Activated T-helper 1 cell treated with anti-CD3 and anti-CD28 coated beads, Interleukin-12 subunit alpha, Interleukin-12 subunit beta, Interleukin-2, Interleukin-4 antibody, amounts not matched to agents 30 ng/mL and 10 ng/mL and 1 ng/mL, durations not matched to agents 14 hours and 24 hours and 36 hours (primary cell): ENCODE measurements at regions of chr2 and their contacts with region 1.

Region 1: DNA sequence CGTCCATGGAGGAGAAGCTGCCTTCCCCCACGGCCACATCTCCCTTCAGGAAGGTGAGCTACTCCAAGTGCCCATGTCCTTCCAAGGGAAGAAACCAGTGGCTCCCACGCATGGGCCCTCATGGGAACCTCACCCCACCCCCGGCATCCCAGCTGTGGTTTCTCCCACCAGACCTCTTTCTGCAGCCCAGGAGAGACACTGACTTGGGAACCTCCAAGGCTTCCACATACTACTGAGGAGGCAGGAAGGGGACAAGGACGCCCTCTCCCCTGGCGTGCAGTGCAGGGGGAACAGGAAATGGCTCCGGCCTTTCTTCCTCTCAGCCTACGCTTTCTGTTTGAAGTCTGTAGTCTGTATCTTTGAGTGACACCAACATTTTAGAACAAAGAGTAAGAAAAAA is 104.5 kb upstream of the EPC2 start:
- DNase-seq: no peak
- H3K4me3 Mint-ChIP-seq: peak overlapping the region; percentile 45
- H3K27ac Mint-ChIP-seq: peak overlapping the region; percentile 76
- H3K4me1 Mint-ChIP-seq: peaks cover 62% of the 10 kb centered on the region
- H3K27me3 Mint-ChIP-seq: no peaks in the 10 kb centered on the region

Region 2: DNA sequence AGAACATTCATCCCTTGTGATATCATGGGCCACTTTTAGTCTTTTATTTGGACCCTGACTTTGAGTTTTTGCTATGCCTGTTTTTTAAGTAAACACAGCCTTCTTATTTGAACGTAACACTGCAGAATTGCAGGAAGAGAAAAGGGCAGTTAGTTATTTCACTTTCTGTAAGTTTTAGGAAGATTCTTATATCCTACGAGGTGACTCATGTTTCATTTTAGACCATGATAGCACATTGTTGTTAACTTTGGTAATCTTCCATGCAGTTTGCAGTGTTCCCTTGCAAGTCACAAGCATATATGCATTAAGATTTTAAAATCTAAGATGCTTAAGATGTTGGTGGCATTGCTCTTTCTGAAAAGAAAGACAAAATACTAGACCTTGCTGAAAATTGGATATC is 24.0 kb before region 1 on chr2:
- intact Hi-C with region 1: no loop called
- DNase-seq: no peak
- H3K4me3 Mint-ChIP-seq: no peak overlapping the region
- H3K27ac Mint-ChIP-seq: peak overlapping the region; percentile 31
- H3K4me1 Mint-ChIP-seq: peaks cover 47% of the 10 kb centered on the region
- H3K27me3 Mint-ChIP-seq: no peaks in the 10 kb centered on the region

Region 3: DNA sequence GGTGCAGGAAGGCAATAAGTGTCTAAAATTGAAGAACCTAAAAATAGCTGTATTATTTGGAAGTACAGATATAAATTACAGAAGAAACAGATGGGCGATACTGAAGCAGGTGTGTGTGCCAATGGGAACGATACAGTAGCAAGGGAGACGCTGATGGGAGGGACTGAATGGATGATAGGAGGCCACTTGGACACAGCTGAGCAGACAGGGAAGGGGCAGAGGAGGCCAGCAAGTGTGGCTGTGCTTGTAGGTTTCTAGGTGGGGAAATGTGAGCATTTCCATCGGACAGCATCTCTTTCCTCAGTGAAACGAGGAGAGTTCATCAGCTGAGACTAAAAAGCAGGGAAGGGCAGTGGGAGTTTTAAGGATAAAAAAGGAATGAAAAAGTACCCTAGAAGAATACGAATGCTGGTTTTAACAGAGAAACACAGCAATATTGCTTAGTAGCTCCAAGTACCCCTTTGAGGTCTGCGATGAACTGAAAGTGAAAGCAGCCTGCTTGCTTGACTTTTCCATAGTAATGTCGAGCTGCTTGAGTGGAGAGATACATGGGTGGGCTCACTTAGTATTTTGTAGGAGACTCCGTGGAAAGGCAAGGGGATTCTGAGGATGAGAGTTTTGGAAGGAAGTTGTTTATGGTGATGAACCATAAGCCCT is 12.8 kb after region 1 on chr2:
- intact Hi-C with region 1: loop called (anchors 1 kb)
- DNase-seq: peak; percentile 32
- H3K4me3 Mint-ChIP-seq: no peak overlapping the region
- H3K27ac Mint-ChIP-seq: no peak overlapping the region
- H3K4me1 Mint-ChIP-seq: peaks cover 6% of the 10 kb centered on the region
- H3K27me3 Mint-ChIP-seq: no peaks in the 10 kb centered on the region

Region 4: DNA sequence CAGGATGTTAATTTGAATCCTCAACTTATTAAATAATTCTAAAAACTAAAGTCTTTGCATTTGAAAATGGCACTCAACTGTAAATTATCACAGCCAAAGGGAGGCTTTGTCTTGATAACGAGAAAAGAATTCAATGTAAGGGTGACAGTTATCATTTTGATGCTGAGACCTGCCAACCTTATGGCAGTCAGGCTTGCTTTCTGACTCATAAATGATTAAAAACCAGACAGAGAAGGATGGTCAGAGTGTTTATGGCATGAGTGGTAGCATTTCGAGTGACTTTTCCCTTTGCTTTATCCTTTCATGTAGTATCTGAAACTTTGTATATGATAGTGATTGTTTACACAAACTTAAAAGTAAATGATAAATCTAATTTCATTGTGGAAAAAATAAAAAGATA is 50.6 kb after region 1 on chr2:
- intact Hi-C with region 1: no loop called
- DNase-seq: no peak
- H3K4me3 Mint-ChIP-seq: no peak overlapping the region
- H3K27ac Mint-ChIP-seq: no peak overlapping the region
- H3K4me1 Mint-ChIP-seq: no peaks in the 10 kb centered on the region
- H3K27me3 Mint-ChIP-seq: peaks cover 9% of the 10 kb centered on the region